GM18951 (cell line): ENCODE measurements at regions of chr2 and their contacts with region 1.

Region 1: DNA sequence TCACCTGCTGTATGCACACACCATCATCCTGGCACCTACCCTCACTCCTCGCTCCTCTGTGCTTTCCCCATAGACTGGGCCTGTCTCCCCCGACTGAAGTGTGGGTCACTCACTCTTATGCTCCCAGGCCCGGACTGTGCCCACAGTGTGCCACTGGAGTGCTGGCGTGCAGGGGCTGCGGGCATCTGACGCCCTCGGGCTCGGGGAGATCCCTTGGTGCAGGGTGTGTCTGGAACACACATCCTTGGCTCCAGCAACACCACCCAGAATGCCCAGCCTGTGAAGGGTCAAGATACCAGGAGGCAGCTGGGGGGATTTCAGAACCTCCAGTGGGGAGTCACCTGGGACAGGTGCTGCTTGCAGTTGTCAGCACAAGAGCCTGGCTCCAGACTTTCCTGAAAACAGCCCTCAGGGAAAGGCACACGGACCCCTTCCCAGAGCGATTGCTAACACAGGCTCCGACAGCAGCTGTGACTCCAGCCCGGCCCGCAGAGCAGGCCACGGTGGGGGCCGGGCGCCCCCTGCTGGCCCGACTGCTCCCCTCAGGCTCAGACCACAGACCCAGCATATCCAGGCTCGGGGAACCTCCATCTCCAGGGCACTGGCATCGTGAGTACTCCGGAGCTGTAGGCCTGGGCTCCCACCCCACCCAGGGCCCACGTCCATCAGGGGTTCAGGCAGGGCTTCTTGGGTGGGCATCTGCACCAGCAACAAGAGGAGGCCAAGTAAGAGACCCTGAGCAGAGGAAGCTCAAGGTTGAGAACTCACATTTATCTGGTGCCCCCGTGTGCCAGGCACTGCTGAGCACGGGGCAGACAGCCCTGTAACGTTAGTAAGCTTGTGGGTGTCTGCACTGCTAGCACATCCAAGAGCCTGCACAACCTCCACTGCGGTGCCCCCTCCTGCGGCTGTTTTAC is 8.6 kb downstream of the HS1BP3 start:
- POLR2A ChIP-seq: no peak

Region 2: DNA sequence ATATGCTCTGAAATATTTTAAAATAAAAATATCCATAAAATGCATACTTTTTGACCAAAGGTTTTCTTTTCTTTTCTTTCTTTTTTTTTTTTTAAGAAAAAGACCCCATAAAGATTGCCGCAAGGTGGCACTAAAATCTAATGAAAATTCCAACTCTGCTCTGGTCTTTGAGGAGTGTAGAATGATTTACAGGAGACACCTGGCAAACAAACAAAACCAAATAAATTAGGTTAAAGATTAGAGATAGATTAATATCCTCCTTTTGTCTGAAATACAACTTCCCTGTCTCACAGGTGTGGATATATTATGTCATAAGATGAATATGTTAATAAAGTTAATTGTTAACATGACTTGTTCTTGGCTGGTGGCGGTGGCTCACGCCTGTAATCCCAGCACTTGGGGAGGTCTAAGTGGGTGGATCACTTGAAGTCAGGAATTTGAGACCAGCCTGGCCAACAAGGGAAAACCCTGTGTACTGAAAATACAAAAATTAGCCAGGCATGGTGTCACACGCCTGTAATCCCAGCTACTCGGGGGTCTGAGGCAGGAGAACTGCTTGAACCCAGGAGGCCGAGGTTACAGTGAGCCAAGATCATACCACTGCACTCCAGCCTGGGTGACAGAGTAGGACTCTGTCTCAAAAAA is 198.9 kb before region 1 on chr2:
- in situ Hi-C with region 1: loop called (anchors 5 kb)
- POLR2A ChIP-seq: no peak